ENCODE measurements at regions of chr14 and their contacts with region 1.

Region 1: GRCh38 chr14:70086685-70087379 is 101.9 kb downstream of the SLC8A3 start:
- DNase-seq: no peak
- H3K4me3 ChIP-seq: no peak overlapping the region
- H3K27ac ChIP-seq: no peak overlapping the region
- H3K27me3 ChIP-seq: no peaks in the 10 kb centered on the region
- CTCF ChIP-seq: peak; percentile 74

Region 2: DNA sequence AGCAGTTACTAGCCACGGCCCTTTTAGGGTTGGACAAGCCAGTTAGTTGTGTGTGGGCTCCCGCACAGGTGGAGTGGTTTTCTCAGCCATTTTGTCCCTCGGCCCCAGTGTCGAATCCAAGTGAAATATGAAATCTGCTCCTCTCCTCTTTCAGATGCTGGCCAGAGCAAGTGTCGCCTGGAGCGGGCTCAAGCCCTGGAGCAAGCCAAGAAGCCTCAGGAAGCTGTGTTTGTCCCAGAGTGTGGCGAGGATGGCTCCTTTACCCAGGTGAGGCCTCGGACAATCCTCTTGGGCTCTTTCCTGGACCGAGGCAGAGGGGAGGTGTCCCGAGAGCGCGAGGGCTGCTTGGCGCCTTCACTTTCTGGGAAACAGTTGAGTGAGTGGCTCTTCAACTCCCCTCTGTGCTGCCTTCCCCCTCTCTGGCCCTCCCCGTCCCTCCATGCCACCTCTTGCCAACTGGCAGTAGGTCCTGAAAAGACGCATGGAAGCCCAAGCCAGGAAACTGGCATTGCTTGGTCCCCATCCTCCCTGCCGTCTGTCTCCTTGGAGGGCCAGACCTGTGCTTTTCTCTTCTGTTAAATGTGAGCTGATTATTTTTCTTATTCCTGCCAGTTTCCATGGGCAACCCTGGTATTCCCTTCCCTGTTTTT is 133.4 kb before region 1 on chr14:
- CTCF ChIA-PET with region 1: no interaction called
- POLR2A ChIA-PET with region 1: no interaction called
- DNase-seq: no peak
- H3K4me3 ChIP-seq: no peak overlapping the region
- H3K27ac ChIP-seq: no peak overlapping the region
- H3K27me3 ChIP-seq: no peaks in the 10 kb centered on the region
- CTCF ChIP-seq: no peak

Region 3: GRCh38 chr14:70073924-70074566 is 12.8 kb before region 1 on chr14:
- CTCF ChIA-PET with region 1: interaction called, 10 read pairs
- POLR2A ChIA-PET with region 1: no interaction called
- DNase-seq: peak; percentile 24
- H3K4me3 ChIP-seq: no peak overlapping the region
- H3K27ac ChIP-seq: no peak overlapping the region
- H3K27me3 ChIP-seq: peaks cover 10% of the 10 kb centered on the region
- CTCF ChIP-seq: peak; percentile 89

Region 4: GRCh38 chr14:70121521-70121920 is 34.7 kb after region 1 on chr14:
- CTCF ChIA-PET with region 1: no interaction called
- POLR2A ChIA-PET with region 1: no interaction called
- DNase-seq: no peak
- H3K4me3 ChIP-seq: no peak overlapping the region
- H3K27ac ChIP-seq: no peak overlapping the region
- H3K27me3 ChIP-seq: no peaks in the 10 kb centered on the region
- CTCF ChIP-seq: no peak

Region 5: DNA sequence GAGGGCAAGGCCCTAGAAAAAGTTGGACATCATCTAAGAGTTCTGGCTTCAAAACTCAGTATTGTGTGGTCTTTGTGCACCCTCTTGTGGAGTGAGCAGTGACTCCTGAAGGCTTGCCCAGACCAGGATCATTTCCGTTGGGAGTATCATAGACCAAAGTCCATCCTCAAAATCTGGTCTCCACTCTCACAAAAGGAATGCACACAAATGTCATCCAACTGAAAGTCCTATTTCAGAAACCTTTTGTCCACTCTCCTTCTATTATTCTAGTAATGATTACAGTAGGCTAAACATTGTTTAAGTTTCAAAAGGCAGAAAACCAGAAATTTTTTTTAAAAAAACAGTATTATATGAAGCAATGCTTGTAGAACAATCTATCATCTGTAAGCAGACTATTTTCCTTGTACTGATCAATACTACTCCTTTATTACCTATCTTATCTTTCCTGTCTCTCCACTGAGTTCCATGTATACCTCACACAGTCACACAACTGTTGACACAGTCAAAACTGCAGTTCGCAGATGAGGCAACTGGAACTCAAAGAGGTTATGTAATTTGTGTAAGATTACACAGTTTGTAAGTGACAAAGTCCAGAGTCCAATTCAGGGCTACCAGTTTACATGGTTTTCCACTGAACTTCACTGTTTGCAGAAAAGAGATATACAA is 231.3 kb after region 1 on chr14:
- CTCF ChIA-PET with region 1: interaction called, 25 read pairs
- POLR2A ChIA-PET with region 1: no interaction called
- DNase-seq: peak; percentile 20
- H3K4me3 ChIP-seq: no peak overlapping the region
- H3K27ac ChIP-seq: no peak overlapping the region
- H3K27me3 ChIP-seq: peaks cover 7% of the 10 kb centered on the region
- CTCF ChIP-seq: peak; percentile 64

Region 6: DNA sequence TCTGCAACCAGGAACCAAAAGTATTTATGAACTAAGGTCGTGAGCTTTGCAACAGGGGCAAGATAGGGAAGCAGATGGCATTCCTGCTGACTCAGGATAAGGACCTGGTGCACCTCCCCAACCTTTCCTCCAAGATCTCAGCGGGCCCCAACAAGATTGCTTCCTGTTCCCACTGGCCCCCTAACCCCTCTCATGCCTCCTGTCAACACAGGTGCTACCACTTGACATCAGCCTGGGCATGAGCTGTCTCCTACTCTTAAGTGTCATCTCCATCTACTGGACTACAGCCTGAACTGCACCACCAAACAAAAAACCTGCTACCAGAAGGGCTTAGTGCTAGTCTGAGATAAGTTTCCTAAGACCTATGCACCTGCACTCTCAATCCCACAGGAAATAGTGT is 481.0 kb after region 1 on chr14:
- CTCF ChIA-PET with region 1: interaction called, 13 read pairs
- POLR2A ChIA-PET with region 1: no interaction called
- DNase-seq: peak; percentile 1
- H3K4me3 ChIP-seq: no peak overlapping the region
- H3K27ac ChIP-seq: no peak overlapping the region
- H3K27me3 ChIP-seq: no peaks in the 10 kb centered on the region
- CTCF ChIP-seq: peak; percentile 64

Measured in AG04450 (cell line).